ENCODE measurements at regions of chr11 and their contacts with region 1.

Region 1: GRCh38 chr11:128831174-128832120 is 35.6 kb downstream of the KCNJ1 start:
- DNase-seq: peak; percentile 81 to 85
- ATAC-seq: peak; percentile 69 to 84 (median 77)
- H3K4me3 ChIP-seq: peak overlapping the region in 4 of 10 donors; percentile 11 to 40 (median 32)
- H3K27ac ChIP-seq: peak overlapping the region in 4 of 10 donors; percentile 28 to 62 (median 46)
- H3K4me1 ChIP-seq: peaks cover 0 to 55% (median 27%) of the 10 kb centered on the region in 9 donors
- H3K27me3 ChIP-seq: no peaks in the 10 kb centered on the region
- CTCF ChIP-seq: peak; percentile 88 to 93 (median 91)

Region 2: DNA sequence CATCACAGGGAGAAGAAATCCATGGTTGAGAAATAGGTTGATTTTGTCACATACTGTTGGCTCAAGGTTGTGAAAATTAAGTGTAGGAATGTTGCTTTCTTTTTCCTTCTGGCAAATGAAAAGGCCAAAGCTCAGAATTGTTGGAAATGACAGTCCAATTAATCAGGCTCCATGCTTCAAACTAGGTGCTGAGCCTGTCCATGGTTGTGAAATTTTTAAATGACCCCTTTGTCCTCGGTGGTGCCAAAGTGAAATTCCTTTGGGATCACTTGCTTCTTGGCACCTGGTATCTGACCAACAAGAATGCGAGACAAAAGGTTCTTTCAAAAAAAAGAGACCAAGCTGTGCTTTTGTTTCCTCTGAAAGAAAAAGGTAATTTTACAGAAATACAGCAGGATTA is 696.0 kb before region 1 on chr11:
- intact Hi-C with region 1: no loop called
- DNase-seq: no peak
- ATAC-seq: no peak
- H3K4me3 ChIP-seq: no peak overlapping the region
- H3K27ac ChIP-seq: no peak overlapping the region
- H3K4me1 ChIP-seq: peaks cover 0 to 11% (median 0%) of the 10 kb centered on the region in 9 donors
- H3K27me3 ChIP-seq: peaks cover 0 to 4% (median 0%) of the 10 kb centered on the region in 7 donors
- CTCF ChIP-seq: no peak

Region 3: GRCh38 chr11:128157423-128158298 is 673.8 kb before region 1 on chr11:
- intact Hi-C with region 1: loop called in 2 of 10 experiments (anchors 5 kb)
- DNase-seq: peak in 1 of 2 donors; percentile 54
- ATAC-seq: peak in 7 of 8 donors; percentile 76 to 91 (median 83)
- H3K4me3 ChIP-seq: peak overlapping the region in 4 of 10 donors; percentile 7 to 26 (median 15)
- H3K27ac ChIP-seq: no peak overlapping the region
- H3K4me1 ChIP-seq: peaks cover 0 to 13% (median 5%) of the 10 kb centered on the region in 9 donors
- H3K27me3 ChIP-seq: no peaks in the 10 kb centered on the region
- CTCF ChIP-seq: peak; percentile 74 to 92 (median 85)

Region 4: DNA sequence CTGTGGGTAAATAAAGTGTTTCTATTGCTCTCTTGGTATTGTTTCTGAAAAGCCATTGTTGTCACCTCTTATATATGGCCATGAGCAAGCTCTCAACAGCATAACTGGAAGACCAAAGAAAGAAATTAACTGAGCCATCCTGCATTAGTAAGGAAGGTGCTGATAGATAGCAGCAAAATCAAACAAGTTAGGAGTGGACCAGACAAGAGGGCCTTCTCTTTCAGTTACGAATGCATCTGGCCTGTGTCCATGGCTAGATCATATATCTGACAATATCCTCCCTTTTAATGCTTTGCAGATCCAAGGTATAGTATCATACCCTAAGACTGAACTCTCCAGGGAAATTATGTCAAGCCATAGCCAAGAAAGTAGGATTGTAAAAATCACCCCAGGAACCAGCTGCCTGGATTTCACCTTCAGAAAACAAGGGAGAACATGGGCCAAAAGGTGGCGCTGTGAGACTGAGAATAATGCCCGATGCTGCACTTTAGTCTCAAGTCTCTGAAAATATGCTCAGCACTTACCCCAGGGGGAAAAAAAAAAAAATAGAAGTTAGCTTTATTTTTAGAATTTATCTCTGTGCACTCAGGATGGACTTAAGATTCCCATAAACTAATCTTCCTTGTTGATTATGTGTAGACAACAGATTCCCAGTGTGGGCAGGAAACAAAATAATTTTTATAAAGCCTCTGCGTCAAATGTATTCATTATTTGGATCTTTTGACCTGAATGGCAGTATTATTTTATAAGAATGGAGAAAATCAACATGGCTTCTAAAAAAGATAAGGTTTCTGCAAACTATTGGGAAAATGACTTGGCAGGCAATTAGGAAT is 659.2 kb before region 1 on chr11:
- intact Hi-C with region 1: loop called in 9 of 10 experiments (anchors 1 to 10 kb)
- DNase-seq: peak; percentile 73 to 87
- ATAC-seq: peak in 7 of 8 donors; percentile 77 to 92 (median 87)
- H3K4me3 ChIP-seq: no peak overlapping the region
- H3K27ac ChIP-seq: peak overlapping the region in 1 of 10 donors; percentile 16
- H3K4me1 ChIP-seq: peaks cover 0 to 13% (median 0%) of the 10 kb centered on the region in 9 donors
- H3K27me3 ChIP-seq: peaks cover 0 to 5% (median 0%) of the 10 kb centered on the region in 7 donors
- CTCF ChIP-seq: peak; percentile 59 to 89 (median 82)

Region 5: DNA sequence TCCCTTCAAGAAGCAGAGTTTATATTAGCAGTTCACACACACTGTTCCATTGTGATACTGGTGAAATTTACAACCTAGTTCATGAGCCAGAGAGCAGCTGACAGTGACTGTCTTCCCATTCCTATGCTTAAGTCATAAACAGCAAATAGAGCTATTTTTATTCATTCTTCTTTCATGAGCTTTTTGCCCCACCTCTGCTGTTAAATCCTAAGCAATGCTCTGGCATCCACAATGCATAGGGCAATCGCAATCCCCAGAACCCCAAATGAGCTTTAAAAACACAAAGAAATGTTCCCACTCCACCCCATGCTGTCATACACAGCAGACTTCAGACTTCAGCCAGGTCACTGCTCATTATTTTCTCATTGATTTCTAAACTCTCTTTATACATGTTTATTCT is 551.6 kb before region 1 on chr11:
- intact Hi-C with region 1: loop called in 5 of 10 experiments (anchors 5 to 10 kb)
- DNase-seq: no peak
- ATAC-seq: no peak
- H3K4me3 ChIP-seq: no peak overlapping the region
- H3K27ac ChIP-seq: no peak overlapping the region
- H3K4me1 ChIP-seq: no peaks in the 10 kb centered on the region
- H3K27me3 ChIP-seq: no peaks in the 10 kb centered on the region
- CTCF ChIP-seq: no peak

Region 6: GRCh38 chr11:128552783-128553661 is 278.4 kb before region 1 on chr11:
- intact Hi-C with region 1: loop called in 2 of 10 experiments (anchors 10 kb)
- DNase-seq: no peak
- ATAC-seq: peak in 3 of 8 donors; percentile 2 to 54 (median 23)
- H3K4me3 ChIP-seq: no peak overlapping the region
- H3K27ac ChIP-seq: peak overlapping the region in 7 of 10 donors; percentile 34 to 85 (median 50)
- H3K4me1 ChIP-seq: peaks cover 3 to 76% (median 56%) of the 10 kb centered on the region in 9 donors
- H3K27me3 ChIP-seq: no peaks in the 10 kb centered on the region
- CTCF ChIP-seq: no peak

Region 7: DNA sequence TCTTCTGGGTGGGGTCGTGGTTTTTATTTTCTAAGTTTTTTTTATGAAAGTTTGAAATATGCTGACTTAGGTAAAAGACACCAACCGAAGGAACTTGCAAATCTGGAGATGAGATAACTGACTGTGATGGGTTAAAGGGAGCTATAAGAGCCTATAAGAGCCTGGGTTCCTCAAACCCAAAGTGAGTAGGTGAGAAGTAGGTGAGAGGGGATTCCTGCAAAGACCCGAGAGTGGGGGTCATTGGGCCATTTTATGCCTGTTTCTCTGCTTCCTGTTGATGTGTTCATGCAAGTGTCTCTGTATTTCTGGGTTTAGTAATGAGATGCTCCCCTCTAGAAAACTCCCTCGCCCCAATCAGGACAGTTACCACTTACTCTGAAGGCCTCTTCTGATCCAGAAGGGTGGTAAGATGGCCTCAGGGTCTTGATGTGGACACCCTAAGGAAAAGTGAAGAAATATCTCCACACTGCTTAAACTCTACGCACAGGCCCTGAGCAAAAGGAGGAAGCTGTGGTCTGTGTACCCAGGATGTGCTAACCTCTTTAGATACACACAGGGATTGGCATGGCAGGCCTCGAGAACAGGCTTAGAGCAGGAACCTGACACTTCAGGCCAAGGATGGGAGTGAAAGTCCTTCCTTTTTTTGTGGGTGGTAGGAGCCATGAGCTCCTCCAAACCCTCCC is 135.8 kb before region 1 on chr11:
- intact Hi-C with region 1: loop called in 1 of 10 experiments (anchors 5 kb)
- DNase-seq: no peak
- ATAC-seq: peak in 4 of 8 donors; percentile 6 to 46 (median 40)
- H3K4me3 ChIP-seq: peak overlapping the region; percentile 72 to 92 (median 87)
- H3K27ac ChIP-seq: peak overlapping the region; percentile 86 to 99 (median 95)
- H3K4me1 ChIP-seq: peaks cover 2 to 83% (median 30%) of the 10 kb centered on the region in 9 donors
- H3K27me3 ChIP-seq: peaks cover 0 to 15% (median 3%) of the 10 kb centered on the region in 7 donors
- CTCF ChIP-seq: no peak

Region 8: GRCh38 chr11:128776424-128777284 is 54.8 kb before region 1 on chr11:
- intact Hi-C with region 1: loop called in 4 of 10 experiments (anchors 5 to 10 kb)
- DNase-seq: peak; percentile 67 to 76
- ATAC-seq: peak; percentile 46 to 80 (median 65)
- H3K4me3 ChIP-seq: peak overlapping the region in 2 of 10 donors; percentile 8 to 11
- H3K27ac ChIP-seq: peak overlapping the region in 7 of 10 donors; percentile 18 to 67 (median 40)
- H3K4me1 ChIP-seq: peaks cover 5 to 72% (median 41%) of the 10 kb centered on the region in 9 donors
- H3K27me3 ChIP-seq: no peaks in the 10 kb centered on the region
- CTCF ChIP-seq: peak; percentile 27 to 67 (median 50)

Region 9: DNA sequence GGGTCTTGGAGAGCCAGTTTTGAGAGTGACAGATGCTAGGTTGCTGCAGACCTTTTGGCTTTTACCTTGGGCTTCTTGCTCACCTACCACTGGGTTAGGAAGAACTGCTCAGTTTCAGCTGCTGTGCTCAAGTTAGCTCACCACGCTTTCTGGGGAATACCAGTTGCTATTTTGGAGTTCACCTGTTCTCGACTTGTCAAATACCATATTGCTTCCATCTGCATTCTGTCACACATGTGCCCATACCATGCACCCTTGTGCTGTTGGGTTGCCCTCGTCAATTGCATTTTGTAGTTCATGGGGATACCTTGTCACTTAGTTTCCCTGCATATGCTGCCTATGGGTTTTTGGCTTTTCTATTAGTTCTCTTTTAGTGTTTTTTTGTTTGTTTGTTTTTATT is 521.2 kb after region 1 on chr11:
- intact Hi-C with region 1: no loop called
- DNase-seq: no peak
- ATAC-seq: no peak
- H3K4me3 ChIP-seq: no peak overlapping the region
- H3K27ac ChIP-seq: no peak overlapping the region
- H3K4me1 ChIP-seq: no peaks in the 10 kb centered on the region
- H3K27me3 ChIP-seq: peaks cover 0 to 34% (median 7%) of the 10 kb centered on the region in 7 donors
- CTCF ChIP-seq: no peak